Activated naive CD8-positive, alpha-beta T cell treated with anti-CD3 and anti-CD28 coated beads, Interleukin-2, amount 10 ng/mL, durations not matched to agents 7 days and 5 days (primary cell): ENCODE measurements at regions of chr6 and their contacts with region 1.

Region 1: DNA sequence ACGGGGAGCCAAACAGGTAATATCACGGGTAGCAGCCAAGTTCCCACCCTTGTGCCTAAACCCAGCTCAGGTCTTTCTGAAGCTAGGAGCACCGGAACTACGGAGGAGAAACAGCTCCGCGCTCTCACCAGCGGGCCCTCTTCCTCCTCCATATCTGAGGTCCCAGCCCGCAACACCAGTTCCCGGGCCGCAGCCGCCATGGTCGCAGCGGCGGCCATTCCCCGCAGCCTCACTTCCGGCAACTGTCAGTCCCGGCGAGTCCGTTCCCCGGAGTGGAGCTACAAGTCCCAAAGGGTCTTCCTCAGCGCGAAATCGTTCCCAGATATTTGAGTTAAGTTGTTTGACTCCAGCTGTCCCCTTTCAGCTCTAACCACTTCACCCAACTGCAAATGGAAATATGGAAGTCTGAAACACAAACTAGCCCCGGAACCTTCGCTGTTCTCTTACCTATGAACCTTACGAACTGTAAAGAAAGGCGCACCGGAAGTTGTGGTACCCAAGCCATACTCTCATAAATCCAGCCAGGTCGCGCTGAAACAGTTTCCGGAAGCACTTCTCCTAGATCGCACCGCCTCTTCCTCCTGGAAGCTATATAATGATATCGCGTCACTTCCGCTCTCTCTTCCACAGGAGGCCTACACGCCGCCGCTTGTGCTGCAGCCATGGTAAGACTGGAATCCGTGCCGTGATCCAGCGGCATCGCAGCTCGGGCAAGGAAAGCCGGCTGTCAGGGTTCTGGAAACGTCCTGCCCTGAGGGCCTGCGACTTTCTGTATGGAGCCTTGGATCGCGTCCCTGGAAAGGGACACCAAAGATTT is at the starts of genes RPS18 and VPS52:
- DNase-seq: peak; percentile 87
- ATAC-seq: peak; percentile 91
- H3K4me3 Mint-ChIP-seq: peak within 1 kb of the TSS; percentile 94
- H3K27ac Mint-ChIP-seq: peak within 1 kb of the TSS; percentile 99
- H3K4me1 Mint-ChIP-seq: peaks cover 43% of the 10 kb centered on the region
- H3K27me3 Mint-ChIP-seq: no peaks in the 10 kb centered on the region
- total RNA-seq, gene RPS18: 3,300 to 3,409 TPM
- total RNA-seq, gene VPS52: 72.3 to 76.0 TPM

Region 2: GRCh38 chr6:33259032-33259431 is 12.6 kb before region 1 on chr6:
- POLR2A ChIA-PET with region 1: interaction called, 16 read pairs
- DNase-seq: no peak
- ATAC-seq: no peak
- H3K4me3 Mint-ChIP-seq: no peak overlapping the region
- H3K27ac Mint-ChIP-seq: no peak overlapping the region
- H3K4me1 Mint-ChIP-seq: peaks cover 10% of the 10 kb centered on the region
- H3K27me3 Mint-ChIP-seq: no peaks in the 10 kb centered on the region

Region 3: DNA sequence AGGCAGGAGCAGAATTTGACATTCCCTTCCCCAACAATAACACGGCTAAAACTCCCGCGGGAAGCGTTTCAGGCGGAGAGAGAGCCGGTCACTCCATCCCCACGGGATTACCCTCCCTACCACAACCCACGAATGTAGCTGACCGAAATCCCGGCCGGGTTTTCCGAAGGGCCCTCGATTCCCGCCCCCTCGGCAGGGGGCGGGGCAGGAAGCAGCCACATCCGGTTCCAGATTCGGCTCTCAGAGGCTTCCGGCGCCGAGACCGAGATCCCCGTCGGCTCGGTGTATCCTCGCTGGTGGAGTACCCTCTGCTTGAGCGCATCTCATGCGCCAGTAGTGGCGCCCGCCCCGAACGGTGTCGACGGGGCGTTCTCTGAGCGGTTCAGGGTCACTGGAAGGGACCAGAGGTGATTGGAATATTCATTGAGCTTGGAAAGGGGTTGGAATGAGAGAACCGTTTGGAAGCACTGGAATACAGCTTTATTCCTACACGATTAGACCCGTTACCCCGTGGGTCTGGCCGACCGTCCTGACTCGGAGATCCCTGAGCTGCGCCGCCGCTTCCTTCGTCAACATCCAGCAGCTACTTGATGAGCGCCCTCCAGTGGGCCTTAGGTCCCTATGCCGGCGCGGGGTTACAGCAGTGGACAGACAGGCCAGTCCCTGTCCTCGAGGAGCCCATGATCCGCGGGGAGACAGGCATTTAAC is 27.7 kb after region 1 on chr6:
- POLR2A ChIA-PET with region 1: interaction called, 69 read pairs
- DNase-seq: peak; percentile 94
- ATAC-seq: peak; percentile 85
- H3K4me3 Mint-ChIP-seq: peak overlapping the region; percentile 99
- H3K27ac Mint-ChIP-seq: peak overlapping the region; percentile 99
- H3K4me1 Mint-ChIP-seq: peaks cover 20% of the 10 kb centered on the region
- H3K27me3 Mint-ChIP-seq: no peaks in the 10 kb centered on the region

Region 4: DNA sequence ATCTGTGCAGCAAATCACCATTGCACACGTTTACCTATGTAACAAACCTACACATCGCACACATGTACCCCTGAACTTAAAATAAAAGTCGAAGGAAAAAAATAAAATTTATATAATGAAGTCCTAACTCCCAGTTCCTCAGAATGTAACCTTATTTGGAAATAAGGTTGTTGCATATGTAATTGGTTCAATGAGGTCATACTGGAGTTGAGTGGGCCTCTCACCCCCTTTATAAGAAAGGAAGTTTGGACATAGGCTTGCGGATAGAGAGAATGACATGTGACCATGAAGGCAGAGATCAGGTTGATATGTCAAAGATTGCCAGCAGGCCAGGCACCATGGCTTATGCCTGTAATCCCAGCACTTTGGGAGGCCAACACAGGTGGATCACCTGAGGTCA is 62.0 kb after region 1 on chr6:
- POLR2A ChIA-PET with region 1: no interaction called
- DNase-seq: no peak
- ATAC-seq: no peak
- H3K4me3 Mint-ChIP-seq: no peak overlapping the region
- H3K27ac Mint-ChIP-seq: no peak overlapping the region
- H3K4me1 Mint-ChIP-seq: peaks cover 7% of the 10 kb centered on the region
- H3K27me3 Mint-ChIP-seq: no peaks in the 10 kb centered on the region

Region 5: DNA sequence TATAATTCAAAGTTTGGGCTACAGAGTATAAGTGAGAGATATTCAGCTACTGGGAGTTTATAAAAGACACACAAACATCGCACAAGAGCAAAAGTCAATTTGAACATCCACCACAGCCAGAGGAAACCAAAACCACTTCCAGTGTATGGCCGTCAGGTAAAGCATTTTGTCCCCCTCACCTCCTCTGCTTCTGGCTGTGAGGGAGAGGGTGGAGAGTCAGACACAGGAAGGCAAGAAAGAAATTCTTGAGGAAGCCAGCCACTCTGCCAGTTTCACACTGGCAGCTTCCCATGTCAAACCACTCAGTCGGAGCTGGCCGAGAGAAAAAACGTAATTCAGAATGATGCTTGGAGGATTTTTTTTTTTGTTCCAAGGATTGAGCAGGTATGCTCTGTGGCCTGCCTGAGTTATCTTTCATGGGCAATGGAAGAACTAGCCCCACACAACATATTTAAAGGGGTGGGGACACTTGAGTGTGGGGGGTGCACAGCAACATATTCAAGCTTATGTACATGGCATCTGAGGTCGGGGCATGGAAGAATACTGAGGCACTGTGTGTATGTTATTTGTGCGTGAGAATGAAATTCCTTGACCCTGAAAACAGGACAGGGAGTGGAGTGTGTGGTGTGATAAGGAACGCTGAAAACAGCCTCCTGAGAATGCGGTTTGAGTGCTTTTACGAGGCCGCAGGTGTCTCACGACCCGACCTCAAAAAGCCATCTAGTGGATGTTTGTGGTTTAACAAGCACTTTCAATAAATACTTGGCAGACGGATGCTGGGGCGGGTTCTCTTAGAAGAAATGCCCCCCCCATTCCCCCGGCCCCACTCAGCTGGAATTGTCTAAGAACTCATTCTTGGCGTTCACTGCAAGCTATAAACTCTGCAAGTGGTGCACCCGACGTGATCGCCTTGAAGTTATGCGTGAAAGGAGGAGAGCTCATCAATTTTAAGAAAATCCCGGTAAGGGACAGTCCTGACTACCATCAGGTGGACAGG is 73.3 kb after region 1 on chr6:
- POLR2A ChIA-PET with region 1: interaction called, 23 read pairs
- DNase-seq: peak; percentile 61
- ATAC-seq: peak; percentile 68
- H3K4me3 Mint-ChIP-seq: peak overlapping the region; percentile 74
- H3K27ac Mint-ChIP-seq: peak overlapping the region; percentile 87
- H3K4me1 Mint-ChIP-seq: peaks cover 28% of the 10 kb centered on the region
- H3K27me3 Mint-ChIP-seq: no peaks in the 10 kb centered on the region

Region 6: GRCh38 chr6:33445119-33445603 is 173.5 kb after region 1 on chr6:
- POLR2A ChIA-PET with region 1: no interaction called
- DNase-seq: no peak
- ATAC-seq: no peak
- H3K4me3 Mint-ChIP-seq: no peak overlapping the region
- H3K27ac Mint-ChIP-seq: no peak overlapping the region
- H3K4me1 Mint-ChIP-seq: peaks cover 5% of the 10 kb centered on the region
- H3K27me3 Mint-ChIP-seq: no peaks in the 10 kb centered on the region

Region 7: GRCh38 chr6:34392497-34393190 is 1121.0 kb after region 1 on chr6 and contains the start of gene NUDT3:
- POLR2A ChIA-PET with region 1: no interaction called
- DNase-seq: peak; percentile 97
- ATAC-seq: peak; percentile 92
- H3K4me3 Mint-ChIP-seq: peak within 1 kb of the TSS; percentile 71
- H3K27ac Mint-ChIP-seq: peak within 1 kb of the TSS; percentile 86
- H3K4me1 Mint-ChIP-seq: peaks cover 4% of the 10 kb centered on the region
- H3K27me3 Mint-ChIP-seq: no peaks in the 10 kb centered on the region
- total RNA-seq, gene NUDT3: 17.7 to 18.7 TPM